ENCODE measurements at regions of chr7 and their contacts with region 1.

Region 1: GRCh38 chr7:17769918-17770317 is 170.4 kb downstream of the SNX13 start:
- DNase-seq: peak; percentile 64
- H3K4me3 ChIP-seq: no peak overlapping the region
- H3K27ac ChIP-seq: no peak overlapping the region
- H3K4me1 ChIP-seq: no peaks in the 10 kb centered on the region
- H3K27me3 ChIP-seq: no peaks in the 10 kb centered on the region
- CTCF ChIP-seq: peak; percentile 71 to 75
- POLR2A ChIP-seq: no peak

Region 2: DNA sequence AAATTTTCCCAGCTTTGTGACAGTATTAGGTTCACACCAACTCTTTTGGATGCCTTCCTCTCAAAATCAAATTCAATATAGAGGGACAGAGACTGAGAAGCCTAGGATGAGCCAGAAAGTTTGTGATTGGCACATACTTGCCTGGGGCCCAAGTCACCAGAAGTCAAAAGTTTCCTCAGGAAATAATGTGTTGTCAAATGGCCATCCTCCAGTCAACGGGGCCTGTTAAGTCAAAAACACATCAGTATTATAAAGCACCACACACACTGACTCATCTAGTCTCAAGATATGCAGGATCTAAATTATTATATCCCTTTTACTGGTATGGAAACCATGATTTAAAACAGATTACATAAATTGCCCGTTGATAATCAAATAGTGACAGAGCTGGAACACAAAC is 313.4 kb before region 1 on chr7:
- CTCF ChIA-PET with region 1: no interaction called
- POLR2A ChIA-PET with region 1: no interaction called
- dilution Hi-C with region 1: no loop called
- intact Hi-C with region 1: no loop called
- DNase-seq: peak; percentile 41
- H3K4me3 ChIP-seq: no peak overlapping the region
- H3K27ac ChIP-seq: no peak overlapping the region
- H3K4me1 ChIP-seq: no peaks in the 10 kb centered on the region
- H3K27me3 ChIP-seq: no peaks in the 10 kb centered on the region
- CTCF ChIP-seq: no peak
- POLR2A ChIP-seq: no peak

Region 3: DNA sequence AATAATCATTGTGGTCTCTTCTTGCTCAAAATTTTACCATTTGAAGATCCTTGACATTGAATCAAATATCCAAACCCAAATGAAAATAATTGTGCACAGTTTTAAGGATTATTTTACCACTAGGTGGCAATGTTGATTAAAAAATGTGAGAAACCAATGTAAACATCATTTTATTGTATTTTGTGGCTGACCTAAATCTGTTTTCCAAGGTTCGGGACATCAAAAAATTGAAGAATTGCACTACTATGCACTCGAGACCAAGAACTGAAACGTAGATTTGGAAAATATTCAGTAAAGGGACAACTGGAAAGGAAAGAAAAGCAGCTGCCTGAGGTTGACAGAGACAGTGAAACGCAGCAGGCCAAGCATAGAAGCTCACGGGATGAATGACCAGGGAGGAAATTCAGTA is 89.0 kb before region 1 on chr7:
- CTCF ChIA-PET with region 1: interaction called, 17 read pairs
- POLR2A ChIA-PET with region 1: no interaction called
- dilution Hi-C with region 1: no loop called
- intact Hi-C with region 1: loop called (anchors 1 kb)
- DNase-seq: peak; percentile 31
- H3K4me3 ChIP-seq: no peak overlapping the region
- H3K27ac ChIP-seq: no peak overlapping the region
- H3K4me1 ChIP-seq: peaks cover 4% of the 10 kb centered on the region
- H3K27me3 ChIP-seq: no peaks in the 10 kb centered on the region
- CTCF ChIP-seq: peak in 1 of 2 donors; percentile 16
- POLR2A ChIP-seq: no peak

Region 4: DNA sequence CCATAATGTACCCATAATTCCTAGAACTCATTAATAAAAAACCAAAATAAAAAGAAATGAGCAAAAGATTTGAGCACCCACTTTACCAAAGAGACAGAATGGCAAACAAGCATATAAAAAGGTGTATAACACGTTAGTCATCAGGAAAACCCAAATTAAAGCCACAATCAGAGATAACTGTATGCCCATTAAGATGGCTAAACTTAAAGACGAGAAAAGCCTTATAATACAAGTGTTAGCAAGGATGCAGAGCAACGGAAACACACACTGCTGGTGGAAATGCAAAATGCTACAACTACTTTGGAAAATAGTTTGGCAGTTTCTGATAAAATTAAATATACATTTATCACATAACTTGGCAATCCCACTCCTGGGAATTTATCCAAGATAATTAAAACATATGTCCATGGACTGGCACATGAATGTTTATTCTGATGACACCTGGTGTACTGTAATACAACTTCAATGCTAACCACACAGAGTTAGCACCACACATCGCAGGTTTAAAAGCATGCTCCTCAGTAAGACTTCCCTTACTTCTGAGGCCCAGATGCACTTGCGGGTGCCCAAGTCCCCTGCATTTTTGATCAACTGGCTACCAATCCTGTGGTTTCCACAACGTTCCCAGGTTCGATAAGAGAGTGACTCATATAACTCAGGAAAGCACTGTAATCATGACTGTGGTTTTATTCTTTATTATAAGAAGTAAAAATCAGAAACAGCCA is 11.7 kb after region 1 on chr7:
- CTCF ChIA-PET with region 1: interaction called, 14 read pairs
- POLR2A ChIA-PET with region 1: no interaction called
- dilution Hi-C with region 1: no loop called
- intact Hi-C with region 1: no loop called
- DNase-seq: peak; percentile 55
- H3K4me3 ChIP-seq: no peak overlapping the region
- H3K27ac ChIP-seq: no peak overlapping the region
- H3K4me1 ChIP-seq: peaks cover 16% of the 10 kb centered on the region
- H3K27me3 ChIP-seq: no peaks in the 10 kb centered on the region
- CTCF ChIP-seq: no peak
- POLR2A ChIP-seq: no peak

Region 5: DNA sequence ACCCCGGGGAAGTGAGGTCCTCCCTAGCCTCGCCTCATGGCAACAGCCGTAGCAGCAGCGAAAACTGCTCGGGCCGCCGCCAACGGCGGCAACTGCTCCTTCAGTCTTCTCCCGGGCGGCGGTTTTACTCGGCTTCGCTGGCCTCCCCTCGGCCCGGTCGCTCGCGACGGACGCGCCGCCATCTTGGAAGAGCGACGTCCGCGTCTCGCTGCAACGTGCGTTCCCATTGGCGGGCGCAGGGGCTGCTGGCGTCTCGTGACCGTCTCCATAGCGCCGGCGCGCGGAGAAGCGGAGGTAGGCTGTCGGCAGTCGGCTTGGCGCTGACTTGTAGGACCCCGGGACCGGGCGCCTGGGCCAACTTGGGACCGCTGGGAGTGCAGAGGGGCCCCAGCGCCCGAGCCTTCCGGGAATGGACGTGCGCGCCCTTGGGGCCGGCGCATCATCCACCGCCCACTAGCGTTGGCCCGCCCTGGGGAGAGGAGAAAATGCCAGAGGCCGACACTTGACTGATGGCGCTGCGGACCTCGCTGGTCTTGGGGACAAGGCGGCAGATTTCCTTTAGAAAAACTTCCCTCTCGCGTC is 170.5 kb after region 1 on chr7 and contains the start of gene SNX13:
- CTCF ChIA-PET with region 1: interaction called, 19 read pairs
- POLR2A ChIA-PET with region 1: no interaction called
- dilution Hi-C with region 1: no loop called
- intact Hi-C with region 1: loop called (anchors 1 kb)
- DNase-seq: peak; percentile 95
- H3K4me3 ChIP-seq: peak within 1 kb of the TSS; percentile 36 to 58 (median 58)
- H3K27ac ChIP-seq: peak within 1 kb of the TSS; percentile 64
- H3K4me1 ChIP-seq: peaks cover 20% of the 10 kb centered on the region
- H3K27me3 ChIP-seq: no peaks in the 10 kb centered on the region
- CTCF ChIP-seq: peak in 1 of 2 donors; percentile 48
- POLR2A ChIP-seq: peak; percentile 78
- total RNA-seq, gene SNX13: 28.5 and 32.2 TPM in 2 replicates

Region 6: GRCh38 chr7:17991866-17992648 is 222.1 kb after region 1 on chr7:
- CTCF ChIA-PET with region 1: interaction called, 13 read pairs
- POLR2A ChIA-PET with region 1: no interaction called
- dilution Hi-C with region 1: no loop called
- intact Hi-C with region 1: loop called (anchors 2 kb)
- DNase-seq: no peak
- H3K4me3 ChIP-seq: no peak overlapping the region
- H3K27ac ChIP-seq: no peak overlapping the region
- H3K4me1 ChIP-seq: no peaks in the 10 kb centered on the region
- H3K27me3 ChIP-seq: no peaks in the 10 kb centered on the region
- CTCF ChIP-seq: peak in 1 of 2 donors; percentile 13
- POLR2A ChIP-seq: no peak

Region 7: GRCh38 chr7:18320971-18321567 is 551.2 kb after region 1 on chr7:
- CTCF ChIA-PET with region 1: interaction called, 79 read pairs
- POLR2A ChIA-PET with region 1: no interaction called
- dilution Hi-C with region 1: no loop called
- intact Hi-C with region 1: loop called (anchors 1 kb)
- DNase-seq: peak; percentile 65
- H3K4me3 ChIP-seq: no peak overlapping the region
- H3K27ac ChIP-seq: no peak overlapping the region
- H3K4me1 ChIP-seq: no peaks in the 10 kb centered on the region
- H3K27me3 ChIP-seq: no peaks in the 10 kb centered on the region
- CTCF ChIP-seq: peak; percentile 27 to 49
- POLR2A ChIP-seq: no peak

Measured in endothelial cell of umbilical vein (primary cell).